ENCODE measurements at regions of chr14 and their contacts with region 1.

Region 1: GRCh38 chr14:95442633-95443021 is 73.8 kb downstream of the SYNE3 start:
- DNase-seq: peak; percentile 61 to 69 (median 66)
- H3K4me3 ChIP-seq: no peak overlapping the region
- H3K4me3 Mint-ChIP-seq: no peak overlapping the region
- H3K27ac ChIP-seq: no peak overlapping the region
- H3K27ac Mint-ChIP-seq: peak overlapping the region in 6 of 7 donors; percentile 23 to 84 (median 64)
- H3K4me1 ChIP-seq: peaks cover 7% of the 10 kb centered on the region
- H3K4me1 Mint-ChIP-seq: peaks cover 3 to 5% (median 5%) of the 10 kb centered on the region in 4 donors
- H3K27me3 ChIP-seq: no peaks in the 10 kb centered on the region
- H3K27me3 Mint-ChIP-seq: no peaks in the 10 kb centered on the region

Region 2: GRCh38 chr14:95431199-95432143 is 11.2 kb before region 1 on chr14:
- CTCF ChIA-PET with region 1: interaction called, 18 read pairs
- POLR2A ChIA-PET with region 1: no interaction called
- intact Hi-C with region 1: no loop called
- DNase-seq: no peak
- H3K4me3 ChIP-seq: no peak overlapping the region
- H3K4me3 Mint-ChIP-seq: no peak overlapping the region
- H3K27ac ChIP-seq: no peak overlapping the region
- H3K27ac Mint-ChIP-seq: peak overlapping the region in 1 of 7 donors; percentile 70
- H3K4me1 ChIP-seq: no peaks in the 10 kb centered on the region
- H3K4me1 Mint-ChIP-seq: peaks cover 0 to 2% (median under 1%) of the 10 kb centered on the region in 4 donors
- H3K27me3 ChIP-seq: no peaks in the 10 kb centered on the region
- H3K27me3 Mint-ChIP-seq: no peaks in the 10 kb centered on the region

Region 3: DNA sequence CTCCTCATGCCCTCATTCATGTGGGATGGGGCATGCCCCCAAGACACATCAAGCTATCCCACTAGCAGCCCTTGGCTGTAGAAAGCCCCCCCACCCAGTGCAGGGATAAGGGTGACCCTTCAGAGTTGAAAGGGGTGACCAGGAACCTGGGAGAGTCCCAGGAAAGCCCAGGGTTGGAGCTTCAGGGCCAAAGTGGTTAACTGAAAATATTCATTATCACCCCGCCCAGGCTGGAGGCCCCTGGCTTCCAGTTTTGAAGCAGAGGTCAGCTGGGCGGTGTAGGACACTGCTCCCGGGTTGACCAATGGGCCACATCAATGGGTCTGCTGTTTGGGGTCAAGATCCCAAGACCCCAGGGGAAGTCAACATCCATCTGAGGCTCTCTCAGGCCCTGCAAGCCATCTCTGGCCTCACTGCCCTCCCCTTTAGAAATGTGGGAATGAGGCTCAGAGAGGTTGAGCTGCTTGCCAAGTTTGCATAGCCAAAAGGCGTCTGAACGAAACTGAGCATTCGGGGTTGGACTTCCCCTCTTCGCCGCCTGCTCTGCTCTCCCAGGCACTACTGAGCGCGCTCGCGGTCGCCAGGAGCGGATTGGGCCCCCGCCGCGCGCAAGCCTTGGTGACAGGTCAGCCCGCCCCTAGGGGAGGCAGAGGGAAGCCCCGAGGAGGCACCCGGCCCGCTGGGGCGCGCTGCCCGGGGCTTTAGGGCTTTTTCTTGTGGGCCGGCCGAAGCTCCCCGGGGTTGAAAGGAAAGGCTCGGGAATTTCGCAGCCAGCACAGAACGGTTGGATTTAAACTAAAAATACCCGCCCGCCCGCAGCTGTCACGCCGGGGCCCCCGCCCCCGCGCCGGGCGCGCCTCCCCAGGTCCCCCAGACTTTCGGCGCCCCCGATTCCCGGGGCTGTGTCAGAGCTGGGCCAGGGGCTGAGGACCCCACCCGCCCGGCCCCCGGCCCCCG is 73.2 kb after region 1 on chr14:
- CTCF ChIA-PET with region 1: interaction called, 845 read pairs
- POLR2A ChIA-PET with region 1: interaction called, 7 read pairs
- intact Hi-C with region 1: no loop called
- DNase-seq: peak; percentile 80 to 93 (median 83)
- H3K4me3 ChIP-seq: peak overlapping the region; percentile 81 to 98
- H3K4me3 Mint-ChIP-seq: peak overlapping the region; percentile 91 to 96 (median 95)
- H3K27ac ChIP-seq: peak overlapping the region; percentile 83
- H3K27ac Mint-ChIP-seq: peak overlapping the region; percentile 95 to 97 (median 96)
- H3K4me1 ChIP-seq: peaks cover 74% of the 10 kb centered on the region
- H3K4me1 Mint-ChIP-seq: peaks cover 55 to 84% (median 71%) of the 10 kb centered on the region in 4 donors
- H3K27me3 ChIP-seq: no peaks in the 10 kb centered on the region
- H3K27me3 Mint-ChIP-seq: no peaks in the 10 kb centered on the region

Region 4: DNA sequence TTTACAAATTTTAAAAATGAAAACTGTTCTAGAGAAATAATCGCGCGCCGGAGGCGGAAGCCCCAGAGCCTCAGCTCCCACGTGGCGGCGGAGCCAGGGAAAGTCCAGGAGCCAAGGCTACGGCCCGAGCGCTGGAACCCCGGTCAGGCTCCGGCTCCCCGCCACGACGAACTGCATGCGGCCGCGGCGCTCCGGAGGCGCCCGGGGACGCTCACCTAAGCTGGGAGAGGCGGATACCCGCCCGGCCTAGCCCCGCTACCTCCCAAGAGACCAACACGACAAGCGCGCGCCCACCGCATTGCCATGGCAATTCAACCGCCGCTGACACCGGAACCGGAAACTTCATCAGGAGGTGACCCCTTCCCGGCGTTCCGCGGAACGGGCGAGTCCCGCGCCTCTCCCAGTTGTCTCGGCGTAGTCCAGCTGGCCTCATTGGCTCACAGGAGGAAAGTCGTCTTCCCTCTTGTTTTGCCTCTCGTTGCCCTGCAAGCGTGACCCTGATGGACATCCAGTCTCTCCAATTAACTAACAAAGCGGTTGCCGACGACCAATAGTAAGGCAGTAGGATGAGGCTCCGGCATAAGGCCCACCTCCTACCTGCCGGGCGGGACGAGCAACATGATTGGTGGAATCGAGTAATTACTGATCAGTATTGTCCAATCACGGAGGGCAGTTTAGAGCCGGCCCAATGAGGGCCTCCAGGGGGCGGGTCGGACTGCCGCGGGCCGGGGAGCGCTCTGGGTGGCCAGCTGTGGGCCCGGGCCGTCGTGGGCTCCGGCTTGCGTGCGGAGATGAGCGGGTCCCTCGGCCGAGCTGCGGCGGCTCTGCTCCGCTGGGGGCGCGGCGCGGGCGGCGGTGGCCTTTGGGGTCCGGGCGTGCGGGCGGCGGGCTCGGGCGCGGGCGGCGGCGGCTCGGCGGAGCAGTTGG is 91.9 kb after region 1 on chr14 and contains the start of gene GLRX5:
- CTCF ChIA-PET with region 1: interaction called, 845 read pairs
- POLR2A ChIA-PET with region 1: interaction called, 37 read pairs
- intact Hi-C with region 1: loop called (anchors 2 kb)
- DNase-seq: peak; percentile 99 to 100 (median 99)
- H3K4me3 ChIP-seq: peak within 1 kb of the TSS; percentile 48 to 76
- H3K4me3 Mint-ChIP-seq: peak within 1 kb of the TSS; percentile 90 to 97 (median 96)
- H3K27ac ChIP-seq: peak within 1 kb of the TSS; percentile 77
- H3K27ac Mint-ChIP-seq: peak within 1 kb of the TSS; percentile 91 to 99 (median 95)
- H3K4me1 ChIP-seq: peaks cover 50% of the 10 kb centered on the region
- H3K4me1 Mint-ChIP-seq: peaks cover 52 to 87% (median 67%) of the 10 kb centered on the region in 4 donors
- H3K27me3 ChIP-seq: no peaks in the 10 kb centered on the region
- H3K27me3 Mint-ChIP-seq: no peaks in the 10 kb centered on the region
- total RNA-seq, gene GLRX5: 17.6 to 18.7 TPM

Region 5: DNA sequence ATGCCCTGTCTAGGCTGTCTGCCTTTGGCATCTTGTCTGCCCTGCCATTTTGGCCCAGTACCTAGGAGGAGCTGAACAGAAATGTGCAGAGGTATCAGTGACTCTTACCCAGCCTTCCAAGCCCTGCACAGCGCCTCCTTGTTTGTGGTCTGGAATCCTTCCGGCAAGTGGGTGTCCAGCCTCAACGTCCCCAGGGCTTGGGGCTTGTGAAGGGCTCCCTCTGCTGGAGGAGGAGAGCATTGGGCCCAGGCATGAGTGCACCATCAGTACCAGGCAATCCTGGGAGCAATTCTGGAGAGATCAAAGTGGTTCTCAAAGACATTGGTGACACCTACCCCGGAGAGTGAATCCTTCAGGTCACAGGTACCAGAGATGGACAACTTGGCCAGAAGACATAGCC is 241.2 kb after region 1 on chr14:
- CTCF ChIA-PET with region 1: no interaction called
- POLR2A ChIA-PET with region 1: no interaction called
- intact Hi-C with region 1: loop called (anchors 5 kb)
- DNase-seq: peak in 3 of 5 donors; percentile 9 to 26 (median 13)
- H3K4me3 ChIP-seq: no peak overlapping the region
- H3K4me3 Mint-ChIP-seq: no peak overlapping the region
- H3K27ac ChIP-seq: no peak overlapping the region
- H3K27ac Mint-ChIP-seq: no peak overlapping the region
- H3K4me1 ChIP-seq: no peaks in the 10 kb centered on the region
- H3K4me1 Mint-ChIP-seq: no peaks in the 10 kb centered on the region
- H3K27me3 ChIP-seq: no peaks in the 10 kb centered on the region
- H3K27me3 Mint-ChIP-seq: peaks cover 6 to 23% of the 10 kb centered on the region in 2 donors

Measured in CD4-positive, alpha-beta memory T cell (primary cell).